Activated CD4-positive, alpha-beta memory T cell treated with anti-CD3 and anti-CD28 coated beads for 36 hours (primary cell): ENCODE measurements at regions of chr16 and their contacts with region 1.

Region 1: DNA sequence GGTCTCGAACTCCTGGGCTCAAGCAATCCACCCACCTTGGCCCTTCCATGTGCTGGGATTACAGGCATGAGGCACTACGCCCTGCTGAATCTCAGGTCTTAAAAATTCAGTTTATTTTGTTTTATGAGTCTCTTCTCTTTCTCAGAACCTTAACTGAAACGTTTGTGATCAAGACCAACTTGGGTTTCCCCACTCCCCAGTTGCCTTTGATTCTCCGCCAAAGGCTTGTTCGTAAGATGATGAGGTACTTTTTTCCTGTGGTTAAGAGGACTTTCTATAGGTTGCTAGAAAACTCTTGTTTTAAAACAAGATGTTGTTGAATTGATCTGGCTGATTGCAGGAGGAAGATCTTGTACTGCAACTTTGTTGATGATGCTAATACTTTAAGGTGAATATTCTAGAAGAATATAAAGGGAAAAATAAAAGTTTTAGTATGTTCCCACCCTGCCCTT is 11.7 kb downstream of the ABCC1 start:
- DNase-seq: peak; percentile 86
- H3K4me3 Mint-ChIP-seq: peak overlapping the region; percentile 78
- H3K27ac Mint-ChIP-seq: peak overlapping the region; percentile 100
- H3K4me1 Mint-ChIP-seq: peaks cover 84% of the 10 kb centered on the region
- H3K27me3 Mint-ChIP-seq: no peaks in the 10 kb centered on the region

Region 2: DNA sequence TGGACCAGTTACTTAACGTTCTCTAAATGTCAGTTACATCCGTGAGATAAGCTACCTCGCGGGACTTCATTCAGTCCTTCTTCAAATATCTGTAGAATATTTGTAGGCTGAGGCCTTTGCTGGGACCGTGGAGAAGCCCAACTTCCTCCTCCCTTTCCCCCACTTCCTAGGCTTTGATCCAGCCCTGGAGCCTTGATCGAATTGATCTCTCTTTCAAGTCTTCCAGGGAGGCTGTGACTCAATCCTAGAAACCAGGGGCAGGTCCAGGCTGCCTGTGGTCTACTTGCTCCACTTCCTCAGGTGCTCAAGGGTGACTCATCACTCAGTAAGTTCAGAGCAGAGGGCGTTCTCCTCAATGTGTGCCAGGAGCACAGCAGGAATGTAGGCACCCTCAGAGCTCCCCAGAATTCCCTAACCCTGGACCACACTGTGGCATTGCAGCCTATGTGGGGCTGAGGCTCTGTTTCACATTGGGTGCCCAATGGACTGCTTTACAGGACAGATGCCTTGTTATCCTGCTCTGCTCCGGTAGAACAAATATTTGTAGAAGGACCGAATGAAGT is 61.5 kb before region 1 on chr16:
- CTCF ChIA-PET with region 1: no interaction called
- POLR2A ChIA-PET with region 1: interaction called, 4 read pairs
- intact Hi-C with region 1: loop called (anchors 2 kb)
- DNase-seq: peak; percentile 80
- H3K4me3 Mint-ChIP-seq: no peak overlapping the region
- H3K27ac Mint-ChIP-seq: no peak overlapping the region
- H3K4me1 Mint-ChIP-seq: peaks cover 28% of the 10 kb centered on the region
- H3K27me3 Mint-ChIP-seq: no peaks in the 10 kb centered on the region

Region 3: GRCh38 chr16:15925631-15926030 is 35.5 kb before region 1 on chr16:
- CTCF ChIA-PET with region 1: no interaction called
- POLR2A ChIA-PET with region 1: no interaction called
- intact Hi-C with region 1: no loop called
- DNase-seq: no peak
- H3K4me3 Mint-ChIP-seq: no peak overlapping the region
- H3K27ac Mint-ChIP-seq: no peak overlapping the region
- H3K4me1 Mint-ChIP-seq: no peaks in the 10 kb centered on the region
- H3K27me3 Mint-ChIP-seq: no peaks in the 10 kb centered on the region

Region 4: DNA sequence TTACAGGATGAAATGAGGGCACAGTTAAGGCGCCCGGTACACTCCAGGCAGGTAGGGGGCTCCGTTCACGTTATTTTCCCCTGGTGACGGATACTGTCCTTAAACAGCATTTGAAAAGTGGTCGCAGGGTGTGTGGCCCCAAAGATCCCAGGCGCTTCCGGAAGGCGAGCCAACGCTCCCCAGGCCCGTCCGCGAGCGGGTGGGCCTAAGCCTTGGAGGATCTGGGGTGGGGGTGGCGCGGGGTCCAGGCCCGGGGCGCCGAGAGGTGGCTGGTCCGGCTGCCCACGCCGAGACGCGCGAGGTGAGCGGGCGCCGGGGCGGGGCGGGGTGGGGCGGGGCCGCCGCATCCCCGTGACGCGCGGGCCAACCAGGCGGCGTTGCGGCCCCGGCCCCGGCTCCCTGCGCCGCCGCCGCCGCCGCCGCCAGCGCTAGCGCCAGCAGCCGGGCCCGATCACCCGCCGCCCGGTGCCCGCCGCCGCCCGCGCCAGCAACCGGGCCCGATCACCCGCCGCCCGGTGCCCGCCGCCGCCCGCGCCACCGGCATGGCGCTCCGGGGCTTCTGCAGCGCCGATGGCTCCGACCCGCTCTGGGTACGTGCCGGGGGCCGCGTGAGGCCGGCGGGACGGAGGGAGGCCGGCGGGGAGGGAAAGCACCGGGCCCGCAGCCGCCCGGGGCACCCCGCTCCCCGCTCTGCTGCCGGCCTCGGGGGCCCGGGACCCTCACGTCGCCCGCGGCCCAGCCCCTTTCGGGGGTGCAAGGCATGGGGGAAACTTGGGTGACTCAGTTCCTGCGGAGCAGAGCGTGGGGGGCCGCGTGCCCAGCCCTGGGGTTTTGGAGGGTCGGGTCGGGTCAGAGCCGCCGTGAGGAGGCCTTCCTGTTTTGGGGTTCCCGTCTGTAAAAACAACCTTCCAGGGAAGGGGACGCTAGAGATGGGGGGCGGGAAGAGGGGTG is 11.6 kb before region 1 on chr16 and contains the start of gene ABCC1:
- CTCF ChIA-PET with region 1: interaction called, 12 read pairs
- POLR2A ChIA-PET with region 1: interaction called, 3 read pairs
- intact Hi-C with region 1: loop called (anchors 1 kb)
- DNase-seq: peak; percentile 60
- H3K4me3 Mint-ChIP-seq: peak within 1 kb of the TSS; percentile 99
- H3K27ac Mint-ChIP-seq: peak within 1 kb of the TSS; percentile 96
- H3K4me1 Mint-ChIP-seq: peaks cover 50% of the 10 kb centered on the region
- H3K27me3 Mint-ChIP-seq: no peaks in the 10 kb centered on the region
- total RNA-seq, gene ABCC1: 49.1 to 50.3 TPM

Region 5: GRCh38 chr16:17607075-17607509 is 1646.0 kb after region 1 on chr16:
- CTCF ChIA-PET with region 1: no interaction called
- POLR2A ChIA-PET with region 1: no interaction called
- intact Hi-C with region 1: no loop called
- DNase-seq: no peak
- H3K4me3 Mint-ChIP-seq: no peak overlapping the region
- H3K27ac Mint-ChIP-seq: no peak overlapping the region
- H3K4me1 Mint-ChIP-seq: peaks cover 13% of the 10 kb centered on the region
- H3K27me3 Mint-ChIP-seq: peaks cover 23% of the 10 kb centered on the region